PC-3 (cell line): ENCODE measurements at regions of chr3 and their contacts with region 1.

Region 1: GRCh38 chr3:72818092-72818773 is 30.0 kb downstream of the SHQ1 start:
- DNase-seq: peak; percentile 56
- ATAC-seq: peak; percentile 12
- H3K4me3 ChIP-seq: no peak overlapping the region
- H3K27ac ChIP-seq: no peak overlapping the region
- H3K4me1 ChIP-seq: peaks cover 31% of the 10 kb centered on the region
- H3K27me3 ChIP-seq: no peaks in the 10 kb centered on the region
- CTCF ChIP-seq: peak; percentile 93

Region 2: GRCh38 chr3:71725279-71725991 is 1092.8 kb before region 1 on chr3 and contains the start of gene EIF4E3:
- CTCF ChIA-PET with region 1: no interaction called
- POLR2A ChIA-PET with region 1: no interaction called
- intact Hi-C with region 1: loop called (anchors 5 kb)
- DNase-seq: peak; percentile 35
- ATAC-seq: peak; percentile 61
- H3K4me3 ChIP-seq: peak within 1 kb of the TSS; percentile 82
- H3K27ac ChIP-seq: no peak within 1 kb of the TSS
- H3K4me1 ChIP-seq: peaks cover 9% of the 10 kb centered on the region
- H3K27me3 ChIP-seq: no peaks in the 10 kb centered on the region; the same call in 1 of the 2 replicates
- CTCF ChIP-seq: no peak
- total RNA-seq, gene EIF4E3: 2.2 and 2.5 TPM in 2 replicates

Region 3: GRCh38 chr3:71926262-71926600 is 892.0 kb before region 1 on chr3:
- CTCF ChIA-PET with region 1: interaction called, 3 read pairs
- POLR2A ChIA-PET with region 1: no interaction called
- intact Hi-C with region 1: loop called (anchors 1 kb)
- DNase-seq: peak; percentile 74
- ATAC-seq: peak; percentile 81
- H3K4me3 ChIP-seq: no peak overlapping the region
- H3K27ac ChIP-seq: no peak overlapping the region
- H3K4me1 ChIP-seq: no peaks in the 10 kb centered on the region
- H3K27me3 ChIP-seq: peaks cover 42% of the 10 kb centered on the region
- CTCF ChIP-seq: peak; percentile 84

Region 4: GRCh38 chr3:72384602-72385001 is 433.6 kb before region 1 on chr3:
- CTCF ChIA-PET with region 1: no interaction called
- POLR2A ChIA-PET with region 1: no interaction called
- intact Hi-C with region 1: loop called (anchors 5 kb)
- DNase-seq: no peak
- ATAC-seq: no peak
- H3K4me3 ChIP-seq: no peak overlapping the region
- H3K27ac ChIP-seq: no peak overlapping the region
- H3K4me1 ChIP-seq: peaks cover 9% of the 10 kb centered on the region
- H3K27me3 ChIP-seq: no peaks in the 10 kb centered on the region
- CTCF ChIP-seq: no peak

Region 5: GRCh38 chr3:72523429-72524151 is 294.6 kb before region 1 on chr3:
- CTCF ChIA-PET with region 1: no interaction called
- POLR2A ChIA-PET with region 1: no interaction called
- intact Hi-C with region 1: loop called (anchors 5 kb)
- DNase-seq: peak; percentile 66
- ATAC-seq: peak; percentile 84
- H3K4me3 ChIP-seq: peak overlapping the region; percentile 11; the same call in 1 of the 2 replicates
- H3K27ac ChIP-seq: peak overlapping the region; percentile 57
- H3K4me1 ChIP-seq: peaks cover 44% of the 10 kb centered on the region
- H3K27me3 ChIP-seq: no peaks in the 10 kb centered on the region
- CTCF ChIP-seq: no peak

Region 6: GRCh38 chr3:72722930-72723726 is 95.1 kb before region 1 on chr3:
- CTCF ChIA-PET with region 1: interaction called, 5 read pairs
- POLR2A ChIA-PET with region 1: no interaction called
- intact Hi-C with region 1: loop called (anchors 5 kb)
- DNase-seq: peak; percentile 92
- ATAC-seq: peak; percentile 71
- H3K4me3 ChIP-seq: peak overlapping the region; percentile 6; the same call in 1 of the 2 replicates
- H3K27ac ChIP-seq: peak overlapping the region; percentile 96
- H3K4me1 ChIP-seq: peaks cover 25% of the 10 kb centered on the region
- H3K27me3 ChIP-seq: no peaks in the 10 kb centered on the region
- CTCF ChIP-seq: 0 out of 2 replicates have a peak, but pooled peaks have one; percentile 17